Natural killer cell (primary cell): ENCODE measurements at regions of chr2 and their contacts with region 1.

Region 1: GRCh38 chr2:57740891-57741290 is 305.7 kb upstream of the VRK2 start:
- DNase-seq: no peak
- ATAC-seq: no peak
- H3K4me3 ChIP-seq: no peak overlapping the region
- H3K4me3 Mint-ChIP-seq: no peak overlapping the region
- H3K27ac ChIP-seq: no peak overlapping the region
- H3K27ac Mint-ChIP-seq: no peak overlapping the region
- H3K4me1 ChIP-seq: no peaks in the 10 kb centered on the region
- H3K4me1 Mint-ChIP-seq: no peaks in the 10 kb centered on the region
- H3K27me3 ChIP-seq: no peaks in the 10 kb centered on the region
- H3K27me3 Mint-ChIP-seq: peaks cover 0 to 2% of the 10 kb centered on the region in 2 donors
- CTCF ChIP-seq: no peak

Region 2: DNA sequence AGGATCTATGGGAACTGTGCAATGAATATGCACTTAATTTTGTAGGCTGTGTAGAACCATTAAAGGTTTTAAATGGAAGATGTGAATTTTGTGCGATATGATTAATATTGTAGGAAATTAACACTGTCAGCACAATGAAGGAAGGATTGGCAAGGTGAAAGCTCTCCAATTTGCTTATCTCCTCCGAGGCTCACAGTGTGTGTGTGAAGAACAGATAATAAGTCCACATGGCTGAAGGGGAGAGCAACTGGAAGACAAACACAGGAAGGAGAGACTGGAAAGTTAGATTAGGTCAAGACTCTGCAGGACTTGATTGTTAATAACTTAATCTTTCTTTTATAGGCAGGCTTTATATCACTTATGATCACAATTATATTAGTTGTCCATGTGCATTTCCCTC is 36.0 kb after region 1 on chr2:
- intact Hi-C with region 1: loop called (anchors 2 kb)
- DNase-seq: no peak
- ATAC-seq: no peak
- H3K4me3 ChIP-seq: no peak overlapping the region
- H3K4me3 Mint-ChIP-seq: no peak overlapping the region
- H3K27ac ChIP-seq: no peak overlapping the region
- H3K27ac Mint-ChIP-seq: no peak overlapping the region
- H3K4me1 ChIP-seq: no peaks in the 10 kb centered on the region
- H3K4me1 Mint-ChIP-seq: no peaks in the 10 kb centered on the region
- H3K27me3 ChIP-seq: no peaks in the 10 kb centered on the region
- H3K27me3 Mint-ChIP-seq: no peaks in the 10 kb centered on the region
- CTCF ChIP-seq: no peak

Region 3: DNA sequence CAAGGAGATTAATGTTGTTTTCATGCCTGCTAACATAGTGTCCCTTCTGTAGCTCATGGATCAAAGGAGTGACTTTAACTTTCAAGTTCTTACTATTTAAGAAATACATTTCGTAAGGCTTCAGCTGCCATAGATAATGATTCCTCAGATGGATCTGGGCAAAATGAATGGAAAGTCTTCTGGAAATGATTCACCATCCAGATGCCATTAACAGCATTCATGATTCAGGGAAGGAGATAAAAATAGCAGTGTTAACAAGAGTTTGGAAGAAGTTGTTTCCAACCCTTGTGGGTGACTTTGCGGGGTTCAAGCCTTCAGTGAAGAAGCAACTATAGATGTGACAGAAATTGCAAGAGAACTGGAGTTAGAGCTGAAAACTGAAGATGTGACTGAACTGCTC is 322.8 kb after region 1 on chr2:
- intact Hi-C with region 1: no loop called
- DNase-seq: no peak
- ATAC-seq: no peak
- H3K4me3 ChIP-seq: no peak overlapping the region
- H3K4me3 Mint-ChIP-seq: no peak overlapping the region
- H3K27ac ChIP-seq: no peak overlapping the region
- H3K27ac Mint-ChIP-seq: peak overlapping the region; percentile 13 to 41
- H3K4me1 ChIP-seq: no peaks in the 10 kb centered on the region
- H3K4me1 Mint-ChIP-seq: peaks cover 36 to 41% of the 10 kb centered on the region in 2 donors
- H3K27me3 ChIP-seq: no peaks in the 10 kb centered on the region
- H3K27me3 Mint-ChIP-seq: no peaks in the 10 kb centered on the region
- CTCF ChIP-seq: no peak